ENCODE measurements at regions of chr1 and their contacts with region 1.

Region 1: GRCh38 chr1:15526490-15527339 is at the start of gene DNAJC16:
- DNase-seq: peak; percentile 100
- ATAC-seq: peak; percentile 70
- H3K4me3 ChIP-seq: peak within 1 kb of the TSS; percentile 93
- H3K27ac ChIP-seq: peak within 1 kb of the TSS; percentile 65
- H3K4me1 ChIP-seq: peaks cover 9% of the 10 kb centered on the region; the same call in 1 of the 2 replicates
- H3K27me3 ChIP-seq: no peaks in the 10 kb centered on the region
- CTCF ChIP-seq: peak in 2 of 3 experiments; percentile 9 to 39; a peak in 2 of 6 replicates
- EP300 ChIP-seq: peak in 1 of 2 experiments; percentile 24; a peak in 1 of 4 replicates
- POLR2A ChIP-seq: peak; percentile 83
- RAD21 ChIP-seq: no peak
- polyA plus RNA-seq, gene DNAJC16: 2.4 to 4.4 TPM

Region 2: DNA sequence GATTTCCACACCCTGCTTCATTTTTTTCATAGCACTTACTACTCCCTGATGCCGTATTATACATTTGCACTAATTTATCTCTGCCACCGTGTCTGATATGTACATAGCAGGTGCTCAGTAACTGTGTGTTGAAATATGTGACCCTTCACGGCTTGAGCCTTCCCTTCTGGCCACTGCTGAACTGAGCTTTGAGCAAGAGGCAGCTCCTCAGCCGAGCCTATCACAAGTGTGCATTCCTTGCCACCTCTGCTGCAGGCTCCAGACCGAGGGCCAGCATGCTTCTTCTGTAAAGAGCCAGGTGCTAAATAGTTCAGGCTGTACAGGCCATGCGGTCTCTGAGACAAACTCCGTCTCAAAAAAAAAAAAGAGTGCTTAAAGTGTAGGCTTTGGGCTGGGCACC is 180.0 kb after region 1 on chr1:
- CTCF ChIA-PET with region 1: no interaction called
- POLR2A ChIA-PET with region 1: interaction called, 10 read pairs
- RAD21 ChIA-PET with region 1: no interaction called
- SMC1A ChIA-PET with region 1: no interaction called
- in situ Hi-C with region 1: no loop called
- intact Hi-C with region 1: no loop called
- DNase-seq: no peak
- ATAC-seq: no peak
- H3K4me3 ChIP-seq: no peak overlapping the region
- H3K27ac ChIP-seq: no peak overlapping the region
- H3K4me1 ChIP-seq: no peaks in the 10 kb centered on the region
- H3K27me3 ChIP-seq: no peaks in the 10 kb centered on the region
- CTCF ChIP-seq: no peak
- EP300 ChIP-seq: no peak
- POLR2A ChIP-seq: no peak
- RAD21 ChIP-seq: no peak

Region 3: GRCh38 chr1:15975805-15976680 is 449.3 kb after region 1 on chr1 and contains the start of gene ZBTB17:
- CTCF ChIA-PET with region 1: no interaction called
- POLR2A ChIA-PET with region 1: no interaction called
- RAD21 ChIA-PET with region 1: no interaction called
- SMC1A ChIA-PET with region 1: no interaction called
- in situ Hi-C with region 1: no loop called
- intact Hi-C with region 1: loop called (anchors 10 kb)
- DNase-seq: peak; percentile 79
- ATAC-seq: peak; percentile 82
- H3K4me3 ChIP-seq: peak within 1 kb of the TSS; percentile 95
- H3K27ac ChIP-seq: peak within 1 kb of the TSS; percentile 80
- H3K4me1 ChIP-seq: peaks cover 4% of the 10 kb centered on the region
- H3K27me3 ChIP-seq: no peaks in the 10 kb centered on the region
- CTCF ChIP-seq: no peak
- EP300 ChIP-seq: no peak
- POLR2A ChIP-seq: peak; percentile 78
- RAD21 ChIP-seq: no peak
- polyA plus RNA-seq, gene ZBTB17: 0.87 to 4.3 TPM